Activated naive CD4-positive, alpha-beta T cell treated with anti-CD3 and anti-CD28 coated beads, Interleukin-2, amount 10 ng/mL, durations not matched to agents 7 days and 5 days (primary cell): ENCODE measurements at regions of chr22 and their contacts with region 1.

Region 1: GRCh38 chr22:41666661-41667258 is 21.9 kb downstream of the SNU13 start:
- DNase-seq: peak; percentile 94
- H3K4me3 Mint-ChIP-seq: peak overlapping the region; percentile 75
- H3K27ac Mint-ChIP-seq: peak overlapping the region; percentile 98
- H3K4me1 Mint-ChIP-seq: peaks cover 12% of the 10 kb centered on the region
- H3K27me3 Mint-ChIP-seq: no peaks in the 10 kb centered on the region

Region 2: GRCh38 chr22:41682033-41682807 is 15.5 kb after region 1 on chr22:
- CTCF ChIA-PET with region 1: interaction called, 11 read pairs
- DNase-seq: peak; percentile 90
- H3K4me3 Mint-ChIP-seq: peak overlapping the region; percentile 98
- H3K27ac Mint-ChIP-seq: peak overlapping the region; percentile 95
- H3K4me1 Mint-ChIP-seq: peaks cover 23% of the 10 kb centered on the region
- H3K27me3 Mint-ChIP-seq: no peaks in the 10 kb centered on the region

Region 3: DNA sequence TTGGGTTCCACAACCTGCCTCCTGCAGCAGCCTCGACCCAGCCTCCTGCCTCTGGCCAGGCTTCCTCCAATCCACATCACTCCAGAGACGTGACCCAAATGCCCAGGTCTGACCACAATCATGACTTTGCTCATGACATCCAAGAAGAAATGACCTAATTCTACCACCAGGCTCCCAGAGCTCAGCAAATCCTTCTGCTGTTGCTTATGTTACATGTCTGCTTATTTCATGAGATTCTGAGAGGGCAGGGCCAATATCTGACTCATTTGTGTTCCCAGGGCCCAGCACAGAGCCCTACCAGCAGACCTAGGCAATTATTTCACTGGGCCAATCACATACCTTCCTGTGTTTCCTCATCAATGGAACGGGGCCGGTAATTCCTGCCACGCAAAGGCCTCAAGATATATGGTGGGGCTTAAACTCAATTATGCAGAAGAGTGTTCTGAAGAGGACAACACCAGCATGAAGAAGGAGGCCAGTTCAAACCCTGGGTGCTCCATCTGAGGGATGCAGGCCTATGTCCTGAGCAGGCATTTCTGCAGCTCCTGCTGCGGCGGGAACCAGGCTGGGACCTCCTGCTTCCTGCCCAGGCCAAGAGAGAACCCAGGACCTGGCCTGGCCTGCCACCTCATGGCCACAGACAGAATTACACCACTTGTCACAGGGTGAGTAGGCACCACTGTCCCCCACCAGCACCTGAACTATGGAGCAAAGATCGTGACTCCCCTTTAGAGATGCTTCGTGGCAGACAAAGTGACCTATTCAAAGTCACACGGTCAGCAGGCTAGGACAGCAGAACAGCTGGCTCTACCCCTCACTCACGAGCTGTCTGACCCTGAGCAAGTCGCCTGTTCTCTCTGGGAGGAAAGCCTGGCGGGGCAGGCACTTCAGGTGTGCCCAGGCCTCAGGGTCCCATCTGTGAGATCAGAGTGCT is 274.3 kb after region 1 on chr22:
- CTCF ChIA-PET with region 1: interaction called, 17 read pairs
- DNase-seq: peak; percentile 93
- H3K4me3 Mint-ChIP-seq: peak overlapping the region; percentile 49
- H3K27ac Mint-ChIP-seq: peak overlapping the region; percentile 100
- H3K4me1 Mint-ChIP-seq: peaks cover 67% of the 10 kb centered on the region
- H3K27me3 Mint-ChIP-seq: no peaks in the 10 kb centered on the region